ENCODE measurements at regions of chr2 and their contacts with region 1.

Region 1: DNA sequence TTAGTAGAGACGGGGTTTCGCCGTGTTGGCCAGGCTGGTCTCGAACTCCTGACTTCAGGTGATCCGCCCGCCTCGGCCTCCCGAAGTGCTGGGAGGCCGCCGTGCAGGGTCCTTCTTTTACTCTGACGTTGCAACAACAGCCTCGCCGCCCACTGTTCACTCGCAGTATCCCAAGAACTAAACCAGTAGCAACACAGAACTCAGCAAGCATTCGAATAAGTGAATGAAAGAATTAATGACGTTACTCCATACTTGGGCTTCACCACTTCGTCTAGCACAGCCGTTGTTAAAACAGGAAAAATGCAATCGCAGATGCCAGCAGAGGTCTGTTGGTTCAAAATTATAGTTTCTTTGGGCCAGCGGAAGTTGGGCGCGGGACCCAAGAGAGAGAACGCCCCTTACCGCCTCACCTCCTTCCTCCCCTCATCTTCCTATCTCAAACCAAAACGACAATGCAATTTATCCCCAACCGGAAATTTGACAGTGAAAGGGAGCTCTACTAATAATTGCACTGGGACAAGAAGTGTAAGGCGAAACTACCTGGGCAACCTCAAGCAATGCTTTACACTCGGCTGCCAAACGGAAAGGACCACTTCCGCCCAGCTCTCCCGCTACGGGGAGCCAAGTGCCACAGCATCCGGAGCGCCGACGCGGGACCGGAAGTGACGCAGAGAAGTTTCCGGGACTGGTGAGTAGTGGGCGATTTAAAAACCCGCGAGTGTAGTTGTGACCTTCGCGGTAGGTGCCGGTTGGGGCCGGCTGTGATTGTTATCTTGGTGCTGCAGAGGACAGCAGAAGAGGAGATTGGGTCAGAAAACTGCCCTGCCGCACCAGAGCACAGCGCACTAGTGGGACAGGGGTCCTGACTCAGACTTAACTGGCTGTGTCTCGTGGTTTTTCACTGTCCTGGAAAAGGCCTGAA is at the starts of genes NIF3L1 and PPIL3:
- DNase-seq: peak; percentile 99
- ATAC-seq: peak; percentile 82
- H3K4me3 ChIP-seq: peak within 1 kb of the TSS; percentile 87
- H3K27ac ChIP-seq: peak within 1 kb of the TSS; percentile 96
- H3K4me1 ChIP-seq: peaks cover 9% of the 10 kb centered on the region
- H3K27me3 ChIP-seq: no peaks in the 10 kb centered on the region
- CTCF ChIP-seq: no peak
- total RNA-seq, gene NIF3L1: 63.1 and 81.5 TPM in 2 replicates
- total RNA-seq, gene PPIL3: 25.9 and 37.1 TPM in 2 replicates

Region 2: GRCh38 chr2:200864176-200864976 is 24.6 kb before region 1 on chr2 and contains the start of gene CLK1:
- CTCF ChIA-PET with region 1: interaction called, 3 read pairs
- POLR2A ChIA-PET with region 1: interaction called, 5 read pairs
- intact Hi-C with region 1: loop called (anchors 2 kb)
- DNase-seq: peak; percentile 96
- ATAC-seq: peak; percentile 84
- H3K4me3 ChIP-seq: peak within 1 kb of the TSS; percentile 93
- H3K27ac ChIP-seq: peak within 1 kb of the TSS; percentile 76
- H3K4me1 ChIP-seq: peaks cover 26% of the 10 kb centered on the region
- H3K27me3 ChIP-seq: no peaks in the 10 kb centered on the region
- CTCF ChIP-seq: no peak
- total RNA-seq, gene CLK1: 46.9 and 51.1 TPM in 2 replicates